H1 (cell line): ENCODE measurements at regions of chr2 and their contacts with region 1.

Region 1: DNA sequence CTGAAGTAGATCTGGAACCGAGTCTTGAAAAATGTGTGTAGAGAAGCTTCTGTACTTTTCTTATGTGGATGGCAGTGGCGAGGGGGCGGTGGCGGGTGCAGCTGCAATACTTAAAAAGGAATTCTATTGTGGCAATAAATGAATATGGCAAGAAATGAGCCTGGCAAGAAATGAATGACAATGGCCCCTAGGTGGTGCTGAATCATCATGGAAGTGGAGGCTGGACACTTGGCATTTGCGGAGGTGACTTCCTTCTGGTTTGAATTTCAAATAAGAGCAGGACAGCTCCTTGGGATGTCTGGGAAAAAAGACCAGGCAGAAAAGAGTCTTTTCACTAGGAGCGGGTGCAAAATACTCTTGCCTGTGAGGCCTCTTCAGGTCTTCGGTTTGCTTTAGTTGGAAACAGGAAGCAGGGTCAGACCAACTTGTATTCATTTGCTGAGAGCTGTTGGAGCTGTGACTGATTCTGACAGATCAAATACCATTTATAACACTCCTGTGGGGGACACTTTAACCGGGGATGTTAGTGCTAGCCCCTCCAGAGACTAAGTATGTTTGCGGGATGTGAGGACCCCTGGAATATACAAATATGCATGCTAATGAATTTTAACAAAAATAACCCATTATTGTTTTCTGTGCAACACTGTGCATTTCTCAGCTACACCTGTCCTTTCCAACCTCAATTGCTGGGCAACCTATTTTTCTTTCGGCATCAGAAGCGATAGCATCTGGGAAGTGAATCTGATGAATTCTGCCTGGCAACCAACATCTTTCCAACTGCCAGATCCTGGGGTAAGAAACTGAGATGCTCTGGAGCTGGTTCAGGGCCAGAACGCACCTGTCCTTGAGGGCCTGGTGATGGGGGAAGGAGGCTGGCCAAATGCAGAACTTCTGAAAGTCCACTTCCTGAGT is 35.4 kb downstream of the FASTKD2 start:
- DNase-seq: peak in 1 of 2 experiments; percentile 61
- H3K4me3 ChIP-seq: no peak overlapping the region
- H3K27ac ChIP-seq: no peak overlapping the region
- H3K4me1 ChIP-seq: peaks cover 14 to 18% (median 15%) of the 10 kb centered on the region in 4 experiments
- H3K27me3 ChIP-seq: no peaks in the 10 kb centered on the region
- CTCF ChIP-seq: peak; percentile 31 to 68 (median 67)
- EP300 ChIP-seq: no peak
- POLR2A ChIP-seq: no peak
- RAD21 ChIP-seq: peak; percentile 91

Region 2: DNA sequence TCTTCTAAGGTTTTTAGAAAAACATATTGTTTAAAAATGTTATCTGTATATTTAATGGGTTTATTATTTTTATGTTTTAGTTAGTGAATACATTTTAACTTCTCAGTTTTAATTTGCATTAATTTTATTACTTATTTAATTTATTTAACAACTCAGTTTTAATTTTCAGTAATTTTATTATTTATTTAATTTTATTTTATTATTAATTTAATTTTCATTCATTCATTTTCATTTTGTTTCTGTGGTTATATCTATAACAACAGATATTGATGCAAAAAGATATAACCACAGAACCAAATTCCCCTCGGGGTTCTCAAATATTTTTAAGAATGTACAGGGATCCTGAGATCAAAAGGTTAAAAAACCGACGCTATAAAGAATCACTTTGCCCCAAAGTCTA is 135.5 kb before region 1 on chr2:
- CTCF ChIA-PET with region 1: no interaction called
- POLR2A ChIA-PET with region 1: no interaction called
- DNase-seq: no peak
- H3K4me3 ChIP-seq: no peak overlapping the region
- H3K27ac ChIP-seq: no peak overlapping the region
- H3K4me1 ChIP-seq: no peaks in the 10 kb centered on the region
- H3K27me3 ChIP-seq: no peaks in the 10 kb centered on the region
- CTCF ChIP-seq: no peak
- EP300 ChIP-seq: no peak
- POLR2A ChIP-seq: no peak
- RAD21 ChIP-seq: no peak

Region 3: DNA sequence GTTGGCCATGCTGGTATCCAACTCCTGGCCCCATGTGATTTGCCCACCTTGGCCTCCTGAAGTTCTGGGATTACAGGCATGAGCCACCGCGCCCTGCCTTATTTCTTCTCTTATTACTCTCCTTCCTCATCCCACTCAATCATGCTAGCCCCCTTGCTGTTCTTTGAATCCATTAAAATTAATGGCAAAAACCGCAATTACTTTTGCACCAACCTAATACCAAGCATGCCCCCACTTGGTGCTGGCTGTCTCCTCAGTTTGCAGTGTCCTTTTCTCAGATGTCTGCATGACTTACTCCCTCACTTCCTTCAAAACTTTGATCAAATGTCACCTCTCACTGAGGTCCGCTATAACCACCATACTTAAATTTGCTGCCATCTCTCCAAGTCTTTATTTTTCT is 117.2 kb before region 1 on chr2:
- CTCF ChIA-PET with region 1: no interaction called
- POLR2A ChIA-PET with region 1: no interaction called
- DNase-seq: no peak
- H3K4me3 ChIP-seq: no peak overlapping the region
- H3K27ac ChIP-seq: no peak overlapping the region
- H3K4me1 ChIP-seq: no peaks in the 10 kb centered on the region
- H3K27me3 ChIP-seq: no peaks in the 10 kb centered on the region
- CTCF ChIP-seq: no peak
- EP300 ChIP-seq: no peak
- POLR2A ChIP-seq: no peak
- RAD21 ChIP-seq: no peak

Region 4: DNA sequence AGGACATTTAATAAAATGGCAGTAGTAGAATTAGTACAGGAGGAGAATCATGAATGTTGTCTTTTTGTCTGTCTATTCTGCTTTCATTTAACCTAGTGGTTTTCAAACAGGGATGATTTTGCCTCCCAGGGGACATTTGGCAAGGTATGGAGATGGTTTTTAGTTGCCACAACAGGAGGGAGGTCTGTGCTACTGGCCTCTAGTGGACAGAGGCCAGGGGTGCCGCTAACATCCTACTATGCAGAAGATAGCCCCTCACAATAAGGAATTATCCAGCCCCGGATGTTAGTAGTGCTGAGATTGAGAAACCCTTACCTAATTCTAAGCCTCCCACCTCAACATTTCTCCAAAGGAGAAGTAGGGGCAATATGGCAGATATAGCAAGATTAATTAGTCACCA is 17.0 kb before region 1 on chr2:
- CTCF ChIA-PET with region 1: interaction called, 81 read pairs
- POLR2A ChIA-PET with region 1: interaction called, 4 read pairs
- DNase-seq: no peak
- H3K4me3 ChIP-seq: no peak overlapping the region
- H3K27ac ChIP-seq: no peak overlapping the region
- H3K4me1 ChIP-seq: no peaks in the 10 kb centered on the region
- H3K27me3 ChIP-seq: no peaks in the 10 kb centered on the region
- CTCF ChIP-seq: peak; percentile 59 to 85 (median 73)
- EP300 ChIP-seq: no peak
- POLR2A ChIP-seq: no peak
- RAD21 ChIP-seq: peak; percentile 38 to 50

Region 5: DNA sequence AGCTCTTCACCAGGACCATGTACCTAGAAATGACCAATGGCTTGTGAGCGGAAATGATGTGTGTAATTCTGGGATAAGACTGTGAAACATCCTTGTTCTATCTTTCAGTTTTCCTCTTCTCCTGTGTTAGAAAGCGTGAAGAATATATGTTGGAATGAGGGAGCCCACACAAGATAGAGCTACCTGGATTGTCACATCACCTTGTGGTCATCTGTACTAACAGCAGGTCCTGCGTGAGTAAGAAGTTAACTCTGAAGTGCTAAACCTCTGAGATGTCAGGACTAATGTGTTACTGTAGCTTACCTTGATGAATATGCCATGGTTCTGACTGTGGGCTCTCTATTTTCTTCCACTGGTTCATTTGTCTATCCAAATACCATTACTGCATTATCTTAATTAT is 40.2 kb after region 1 on chr2:
- CTCF ChIA-PET with region 1: interaction called, 14 read pairs
- POLR2A ChIA-PET with region 1: interaction called, 4 read pairs
- DNase-seq: no peak
- H3K4me3 ChIP-seq: no peak overlapping the region
- H3K27ac ChIP-seq: no peak overlapping the region
- H3K4me1 ChIP-seq: no peaks in the 10 kb centered on the region
- H3K27me3 ChIP-seq: no peaks in the 10 kb centered on the region
- CTCF ChIP-seq: peak in 2 of 3 experiments; percentile 45 to 70; a peak in 3 of 4 replicates
- EP300 ChIP-seq: no peak
- POLR2A ChIP-seq: no peak
- RAD21 ChIP-seq: peak; percentile 57 to 69

Region 6: GRCh38 chr2:206989306-206989705 is 188.5 kb after region 1 on chr2:
- CTCF ChIA-PET with region 1: interaction called, 38 read pairs
- POLR2A ChIA-PET with region 1: interaction called, 3 read pairs
- DNase-seq: peak; percentile 29 to 61
- H3K4me3 ChIP-seq: no peak overlapping the region
- H3K27ac ChIP-seq: no peak overlapping the region
- H3K4me1 ChIP-seq: no peaks in the 10 kb centered on the region
- H3K27me3 ChIP-seq: no peaks in the 10 kb centered on the region
- CTCF ChIP-seq: peak; percentile 74 to 93 (median 90)
- EP300 ChIP-seq: no peak
- POLR2A ChIP-seq: no peak
- RAD21 ChIP-seq: peak; percentile 68 to 79

Region 7: DNA sequence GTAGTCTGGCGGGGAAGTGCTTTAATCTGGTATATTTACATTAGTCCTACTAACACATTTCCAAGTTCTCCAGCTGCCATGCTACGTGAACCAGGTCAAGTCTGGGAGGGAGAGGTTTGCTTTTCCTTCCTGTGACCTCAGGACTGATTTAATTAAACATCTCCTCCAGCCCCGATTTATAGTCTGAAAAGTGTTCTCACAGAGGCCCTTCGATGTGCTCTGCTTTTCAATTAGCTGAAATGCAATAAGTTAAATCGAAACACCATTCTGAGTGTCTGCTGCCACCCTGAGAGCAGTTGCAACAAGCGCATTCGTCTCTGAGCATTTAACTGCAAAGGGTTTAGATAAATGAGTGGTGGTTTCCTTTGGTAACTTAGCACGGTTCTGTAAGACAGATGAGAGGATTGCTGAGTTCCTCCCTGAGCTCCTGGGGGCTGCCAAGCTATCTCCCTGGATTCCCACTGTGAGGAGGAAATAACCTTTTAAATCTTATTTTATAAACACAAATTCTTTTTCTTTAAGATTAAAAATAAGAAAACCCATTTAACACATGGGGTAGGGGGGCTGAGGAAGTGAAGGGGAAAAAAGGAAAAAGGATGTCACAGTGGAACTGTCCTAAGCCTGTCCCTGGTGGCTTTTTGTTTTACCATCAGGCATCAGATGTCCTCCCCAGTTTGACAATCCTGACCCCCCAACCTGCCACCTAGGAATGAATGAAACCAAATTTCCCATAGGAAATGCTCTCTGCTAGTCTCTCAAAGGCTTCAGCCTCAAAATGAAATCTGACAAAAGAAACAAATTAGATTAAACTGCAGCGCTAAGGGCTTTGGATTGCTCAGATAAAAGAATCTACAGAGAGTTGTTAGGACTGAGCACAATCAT is 672.5 kb after region 1 on chr2:
- CTCF ChIA-PET with region 1: interaction called, 22 read pairs
- POLR2A ChIA-PET with region 1: interaction called, 3 read pairs
- DNase-seq: peak in 1 of 2 experiments; percentile 44
- H3K4me3 ChIP-seq: no peak overlapping the region
- H3K27ac ChIP-seq: no peak overlapping the region
- H3K4me1 ChIP-seq: peaks cover 4 to 12% (median 5%) of the 10 kb centered on the region in 4 experiments; a peak in 4 of 7 replicates
- H3K27me3 ChIP-seq: no peaks in the 10 kb centered on the region
- CTCF ChIP-seq: peak in 2 of 3 experiments; percentile 80 to 83; a peak in 3 of 4 replicates
- EP300 ChIP-seq: no peak
- POLR2A ChIP-seq: no peak
- RAD21 ChIP-seq: peak; percentile 94 to 99